Activated B cell treated with CpG ODN at 0.5 μM for 24 hours (primary cell): ENCODE measurements at regions of chr11 and their contacts with region 1.

Region 1: GRCh38 chr11:75445315-75445953 is 12.4 kb upstream of the KLHL35 start:
- DNase-seq: peak; percentile 69
- ATAC-seq: peak; percentile 98
- H3K4me3 Mint-ChIP-seq: no peak overlapping the region
- H3K27ac Mint-ChIP-seq: no peak overlapping the region
- H3K4me1 Mint-ChIP-seq: no peaks in the 10 kb centered on the region
- H3K27me3 Mint-ChIP-seq: no peaks in the 10 kb centered on the region
- CTCF ChIP-seq: no peak

Region 2: DNA sequence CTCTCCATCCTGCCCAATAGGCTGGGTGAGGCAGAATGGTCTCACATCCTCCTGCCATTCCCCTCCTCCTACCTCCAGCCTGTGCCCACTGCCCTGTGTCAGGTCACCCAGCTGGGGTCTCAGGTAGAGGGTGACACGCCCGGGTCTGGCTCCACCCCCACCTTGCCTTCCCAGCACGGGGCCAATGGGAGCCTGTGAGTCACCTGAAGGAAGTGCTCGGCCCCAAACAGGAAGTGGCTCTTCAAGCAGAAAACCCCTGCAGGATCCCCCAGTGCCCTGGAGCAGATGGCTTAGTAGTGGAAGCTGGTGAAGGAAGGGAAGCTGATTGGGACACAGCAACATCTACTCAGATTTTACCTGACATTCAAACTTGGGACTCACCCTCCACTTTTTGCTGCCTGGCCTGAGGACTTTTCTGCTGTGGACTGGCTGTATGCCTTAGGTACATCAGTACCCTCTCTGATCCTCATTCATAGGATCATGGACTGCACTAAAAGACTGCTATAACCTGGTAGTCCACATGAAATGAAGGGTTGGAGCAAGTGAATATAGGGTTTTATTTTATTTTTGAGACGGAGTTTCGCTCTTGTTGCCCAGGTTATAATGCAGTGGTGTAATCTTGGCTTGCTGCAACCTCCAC is 46.9 kb after region 1 on chr11:
- CTCF ChIA-PET with region 1: interaction called, 3 read pairs
- POLR2A ChIA-PET with region 1: no interaction called
- intact Hi-C with region 1: loop called (anchors 5 kb)
- DNase-seq: peak; percentile 27
- ATAC-seq: peak; percentile 94
- H3K4me3 Mint-ChIP-seq: peak overlapping the region; percentile 53
- H3K27ac Mint-ChIP-seq: no peak overlapping the region
- H3K4me1 Mint-ChIP-seq: peaks cover 13% of the 10 kb centered on the region
- H3K27me3 Mint-ChIP-seq: no peaks in the 10 kb centered on the region
- CTCF ChIP-seq: no peak